WTC11 (cell line): ENCODE measurements at regions of chr11 and their contacts with region 1.

Region 1: GRCh38 chr11:64000026-64000739 is 13.9 kb downstream of the OTUB1 start:
- DNase-seq: peak; percentile 76
- ATAC-seq: peak; percentile 34
- H3K4me3 Mint-ChIP-seq: peak overlapping the region; percentile 64
- H3K27ac Mint-ChIP-seq: no peak overlapping the region
- H3K4me1 Mint-ChIP-seq: peaks cover 11% of the 10 kb centered on the region
- H3K27me3 Mint-ChIP-seq: peaks cover 42% of the 10 kb centered on the region
- CTCF ChIP-seq: peak; percentile 64

Region 2: GRCh38 chr11:63813035-63813562 is 187.1 kb before region 1 on chr11 and contains the start of gene SPINDOC:
- CTCF ChIA-PET with region 1: no interaction called
- POLR2A ChIA-PET with region 1: no interaction called
- DNase-seq: peak; percentile 75
- ATAC-seq: peak; percentile 64
- H3K4me3 Mint-ChIP-seq: peak within 1 kb of the TSS; percentile 89
- H3K27ac Mint-ChIP-seq: peak within 1 kb of the TSS; percentile 73
- H3K4me1 Mint-ChIP-seq: peaks cover 32% of the 10 kb centered on the region
- H3K27me3 Mint-ChIP-seq: peaks cover 15% of the 10 kb centered on the region
- CTCF ChIP-seq: no peak
- total RNA-seq, gene SPINDOC: 93.8 to 108 TPM (median 106 TPM) in 3 replicates

Region 3: GRCh38 chr11:64021757-64022093 is 21.5 kb after region 1 on chr11:
- CTCF ChIA-PET with region 1: interaction called, 75 read pairs
- POLR2A ChIA-PET with region 1: no interaction called
- DNase-seq: no peak
- ATAC-seq: peak; percentile 14
- H3K4me3 Mint-ChIP-seq: no peak overlapping the region
- H3K27ac Mint-ChIP-seq: peak overlapping the region; percentile 89; the same call in 1 of the 2 replicates
- H3K4me1 Mint-ChIP-seq: peaks cover 60% of the 10 kb centered on the region
- H3K27me3 Mint-ChIP-seq: peaks cover 38% of the 10 kb centered on the region
- CTCF ChIP-seq: no peak

Region 4: GRCh38 chr11:64036087-64037026 is 36.2 kb after region 1 on chr11:
- CTCF ChIA-PET with region 1: interaction called, 55 read pairs
- POLR2A ChIA-PET with region 1: interaction called, 5 read pairs
- DNase-seq: no peak
- ATAC-seq: peak; percentile 2; the same call in 1 of the 2 replicates
- H3K4me3 Mint-ChIP-seq: peak overlapping the region; percentile 34
- H3K27ac Mint-ChIP-seq: no peak overlapping the region
- H3K4me1 Mint-ChIP-seq: peaks cover 14% of the 10 kb centered on the region
- H3K27me3 Mint-ChIP-seq: peaks cover 93% of the 10 kb centered on the region
- CTCF ChIP-seq: no peak

Region 5: DNA sequence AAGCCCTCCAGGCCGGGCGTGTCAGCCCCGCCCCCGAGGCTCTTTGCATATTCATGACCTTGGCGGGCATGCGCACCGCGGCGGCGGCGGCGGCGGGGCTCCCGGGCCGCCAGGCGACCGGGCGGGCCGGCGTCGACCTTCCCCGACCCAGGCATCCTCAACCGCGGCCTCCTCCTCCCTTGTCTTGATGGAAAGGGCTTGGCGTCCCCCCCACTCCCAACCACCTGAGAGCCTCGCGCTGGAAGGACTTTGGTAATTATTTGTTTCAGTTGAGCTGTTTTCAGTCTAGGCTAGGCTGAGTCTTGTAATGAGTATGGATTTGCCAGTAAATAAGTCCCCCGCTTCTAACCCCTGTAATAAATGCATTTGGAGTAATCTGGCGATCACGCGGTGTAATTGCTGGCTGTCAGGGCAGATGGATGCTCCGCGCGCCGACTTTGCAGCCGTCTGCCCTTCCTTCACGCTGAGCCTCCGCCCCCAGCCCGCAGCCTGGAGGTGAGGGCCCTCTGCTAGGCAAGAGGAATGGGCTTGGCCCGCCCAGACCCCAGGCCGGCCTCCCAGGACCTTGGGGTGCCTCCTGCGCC is 60.8 kb after region 1 on chr11:
- CTCF ChIA-PET with region 1: interaction called, 13 read pairs
- POLR2A ChIA-PET with region 1: no interaction called
- DNase-seq: peak; percentile 83
- ATAC-seq: peak; percentile 73
- H3K4me3 Mint-ChIP-seq: peak overlapping the region; percentile 74
- H3K27ac Mint-ChIP-seq: no peak overlapping the region
- H3K4me1 Mint-ChIP-seq: peaks cover 9% of the 10 kb centered on the region
- H3K27me3 Mint-ChIP-seq: peaks cover 98% of the 10 kb centered on the region
- CTCF ChIP-seq: no peak

Region 6: DNA sequence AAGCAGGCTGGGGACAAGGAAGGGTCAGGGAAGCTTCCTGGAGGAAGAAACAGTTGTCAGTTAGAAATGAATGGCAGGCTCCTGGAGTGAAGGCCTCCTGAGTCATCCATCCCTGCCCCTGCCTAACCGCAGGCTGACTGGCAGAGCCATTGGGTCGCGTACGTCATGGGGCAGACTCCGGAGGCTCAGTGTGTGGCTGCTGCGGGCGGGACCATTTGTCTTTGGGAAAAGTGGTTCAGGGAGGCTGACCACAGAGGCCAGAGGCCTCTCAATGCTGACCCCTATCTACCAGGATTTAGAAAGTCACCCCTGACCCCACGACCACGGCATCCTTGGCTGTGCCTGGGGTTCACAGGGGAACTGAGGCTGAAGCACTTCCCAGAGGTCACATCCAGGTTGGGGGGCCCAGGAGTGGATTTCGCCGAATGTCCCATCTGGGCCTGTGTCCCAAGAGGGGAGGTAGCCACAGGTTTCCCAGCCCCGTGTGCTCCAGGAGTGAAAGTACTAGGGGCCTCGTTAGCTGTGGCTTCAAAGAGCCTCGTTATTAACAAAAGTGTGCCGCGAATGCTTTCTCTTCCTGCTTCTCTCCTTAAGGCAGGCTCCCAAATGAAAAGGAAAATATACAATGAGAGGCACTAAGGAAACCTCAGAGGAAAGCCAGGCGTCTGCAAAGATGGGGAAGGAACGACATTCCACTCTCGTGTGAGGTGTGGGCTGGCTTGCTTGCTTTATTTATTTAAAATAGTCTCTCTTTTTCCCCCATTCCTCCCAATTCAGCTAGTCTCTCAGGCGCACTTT is 94.5 kb after region 1 on chr11:
- CTCF ChIA-PET with region 1: interaction called, 12 read pairs
- POLR2A ChIA-PET with region 1: no interaction called
- DNase-seq: no peak
- ATAC-seq: no peak
- H3K4me3 Mint-ChIP-seq: no peak overlapping the region
- H3K27ac Mint-ChIP-seq: no peak overlapping the region
- H3K4me1 Mint-ChIP-seq: peaks cover 23% of the 10 kb centered on the region
- H3K27me3 Mint-ChIP-seq: peaks cover 62% of the 10 kb centered on the region
- CTCF ChIP-seq: no peak

Region 7: DNA sequence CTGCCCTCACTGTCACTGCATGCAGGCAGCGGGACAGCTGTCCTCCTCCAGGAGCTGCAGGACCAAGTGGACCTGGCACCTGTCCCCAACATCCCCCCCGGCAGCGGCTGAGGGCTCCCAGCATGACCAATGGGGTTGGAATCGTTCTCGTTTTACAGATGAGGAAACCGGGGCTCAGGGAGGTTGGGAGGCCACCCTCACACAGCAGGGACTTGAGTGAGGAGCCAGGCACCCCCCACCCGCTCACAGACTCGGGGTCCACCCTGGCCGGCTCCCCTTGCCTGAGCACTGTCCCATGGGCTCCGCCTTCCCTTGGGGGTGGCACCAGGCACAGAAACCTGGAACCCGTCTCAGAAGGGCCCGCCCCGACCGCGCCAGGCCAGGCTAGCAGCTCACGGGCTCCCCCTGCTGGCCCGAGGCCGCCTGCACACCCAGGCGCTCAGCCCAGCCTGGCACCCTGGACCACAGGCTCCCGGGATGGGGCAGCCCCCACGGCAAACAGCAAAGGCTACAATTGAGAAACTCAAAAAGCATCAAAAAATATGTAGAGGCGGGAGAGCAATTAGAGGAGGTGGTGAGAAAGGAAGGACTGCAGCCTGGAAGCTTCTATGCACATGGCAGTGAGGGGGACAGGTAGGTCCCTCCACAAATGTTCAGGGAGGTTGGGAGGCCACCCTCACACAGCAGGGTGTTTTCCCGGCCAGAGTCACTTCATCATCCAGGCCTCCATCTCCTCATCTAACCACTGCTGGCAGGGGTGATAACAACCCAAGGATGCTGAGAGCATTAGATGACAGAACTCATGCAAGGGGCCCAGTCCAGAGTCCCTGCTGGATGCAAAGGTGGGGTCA is 152.9 kb after region 1 on chr11:
- CTCF ChIA-PET with region 1: interaction called, 75 read pairs
- POLR2A ChIA-PET with region 1: no interaction called
- DNase-seq: peak; percentile 78
- ATAC-seq: peak; percentile 83
- H3K4me3 Mint-ChIP-seq: no peak overlapping the region
- H3K27ac Mint-ChIP-seq: no peak overlapping the region
- H3K4me1 Mint-ChIP-seq: peaks cover 30% of the 10 kb centered on the region
- H3K27me3 Mint-ChIP-seq: peaks cover 2% of the 10 kb centered on the region; the same call in 1 of the 2 replicates
- CTCF ChIP-seq: peak; percentile 99